Dorsolateral prefrontal cortex (tissue), 120 donors: ENCODE measurements at regions of chr20 and their contacts with region 1.

Region 1: GRCh38 chr20:35049776-35050352 is 42.7 kb downstream of the TRPC4AP start:
- DNase-seq: no peak
- H3K4me3 ChIP-seq: peak overlapping the region in 4 of 59 donors; percentile 5 to 25 (median 8)
- H3K27ac ChIP-seq: peak overlapping the region; percentile 4 to 100 (median 95)
- H3K27me3 ChIP-seq: no peaks in the 10 kb centered on the region
- CTCF ChIP-seq: peak in 17 of 56 donors; percentile 7 to 50 (median 26)

Region 2: DNA sequence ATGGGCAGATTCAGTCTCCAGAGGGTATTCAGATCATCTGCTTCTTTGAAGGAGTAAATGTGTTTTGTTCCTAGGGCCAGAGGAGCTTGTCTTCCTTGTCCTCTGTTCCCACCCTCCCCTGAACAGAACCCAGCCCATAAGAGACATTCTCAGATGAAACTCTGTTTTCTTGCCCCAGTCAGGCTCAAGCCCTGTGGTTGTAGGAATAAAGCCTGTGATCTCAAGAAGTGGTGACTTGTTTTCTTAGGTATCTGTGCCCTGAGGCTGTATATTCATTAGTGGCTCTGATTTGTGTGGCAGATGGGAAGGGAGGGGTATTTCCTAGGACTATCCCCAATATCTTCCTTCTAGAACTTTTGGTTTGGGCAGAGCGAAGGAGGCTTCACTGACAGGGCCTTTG is 122.1 kb before region 1 on chr20:
- intact Hi-C with region 1: no loop called
- DNase-seq: no peak
- H3K4me3 ChIP-seq: no peak overlapping the region
- H3K27ac ChIP-seq: peak overlapping the region in 15 of 59 donors; percentile 1 to 50 (median 26)
- H3K27me3 ChIP-seq: no peaks in the 10 kb centered on the region
- CTCF ChIP-seq: no peak

Region 3: DNA sequence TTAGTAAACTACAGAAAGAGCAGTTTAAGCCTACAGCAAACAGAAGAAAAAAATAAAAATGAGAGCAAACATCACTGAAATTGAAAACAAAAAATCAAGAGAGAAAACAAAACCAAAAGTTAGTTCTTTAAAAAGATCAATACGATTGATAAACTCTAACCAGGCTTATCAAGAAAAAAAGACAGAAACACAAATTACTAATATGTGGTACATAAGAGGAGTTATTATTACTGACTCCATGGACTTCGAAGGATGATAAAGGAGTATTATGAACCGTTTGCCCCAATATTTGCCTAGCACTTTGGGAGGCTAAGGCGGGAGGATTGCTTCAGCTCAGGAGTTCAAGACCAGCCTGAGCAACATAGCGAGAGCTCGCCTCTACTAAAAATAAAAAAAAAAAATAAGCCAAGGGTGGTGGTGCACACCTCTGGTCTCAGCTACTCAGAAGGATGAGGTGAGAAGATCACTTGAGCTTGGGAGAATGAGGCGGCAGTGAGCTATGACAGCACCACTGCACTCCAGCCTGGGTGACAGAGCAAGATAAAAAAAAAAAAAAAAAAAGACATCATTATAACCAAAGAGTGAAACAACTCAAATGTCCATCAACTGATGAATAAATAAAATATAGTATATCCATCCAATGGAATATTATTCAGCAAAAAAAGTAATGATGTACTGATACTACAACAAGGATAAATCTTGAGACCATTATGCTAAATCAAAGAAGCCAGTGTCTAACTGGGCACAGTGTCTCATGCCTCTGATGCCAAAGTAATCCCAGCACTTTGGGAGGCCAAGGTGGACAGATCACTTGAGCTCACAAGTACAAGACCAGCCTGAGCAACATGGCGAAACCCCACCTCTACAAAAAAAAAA is 29.8 kb after region 1 on chr20:
- intact Hi-C with region 1: loop called in 1 of 2 experiments (anchors 2 kb)
- DNase-seq: no peak
- H3K4me3 ChIP-seq: no peak overlapping the region
- H3K27ac ChIP-seq: peak overlapping the region in 32 of 59 donors; percentile 6 to 75 (median 48)
- H3K27me3 ChIP-seq: no peaks in the 10 kb centered on the region
- CTCF ChIP-seq: no peak

Region 4: GRCh38 chr20:35954200-35954906 is 904.5 kb after region 1 on chr20 and contains the start of gene SCAND1:
- intact Hi-C with region 1: no loop called
- DNase-seq: peak; percentile 87 to 97 (median 95)
- H3K4me3 ChIP-seq: peak within 1 kb of the TSS; percentile 69 to 100 (median 95)
- H3K27ac ChIP-seq: peak within 1 kb of the TSS; percentile 84 to 100 (median 96)
- H3K27me3 ChIP-seq: no peaks in the 10 kb centered on the region
- CTCF ChIP-seq: peak; percentile 88 to 100 (median 99)
- total RNA-seq, gene SCAND1: 20.1 to 63.9 (median 44.4) TPM